Activated CD8-positive, alpha-beta T cell treated with anti-CD3 and anti-CD28 coated beads, Interleukin-2, amount 10 ng/mL, durations not matched to agents 7 days and 5 days (primary cell): ENCODE measurements at regions of chr18 and their contacts with region 1.

Region 1: GRCh38 chr18:59070181-59070912 is 69.3 kb upstream of the SEC11C start:
- DNase-seq: peak; percentile 83
- ATAC-seq: peak; percentile 88
- H3K4me3 Mint-ChIP-seq: no peak overlapping the region
- H3K27ac Mint-ChIP-seq: no peak overlapping the region
- H3K4me1 Mint-ChIP-seq: no peaks in the 10 kb centered on the region
- H3K27me3 Mint-ChIP-seq: peaks cover 13% of the 10 kb centered on the region

Region 2: GRCh38 chr18:58776084-58776483 is 294.3 kb before region 1 on chr18:
- CTCF ChIA-PET with region 1: interaction called, 30 read pairs
- POLR2A ChIA-PET with region 1: no interaction called
- DNase-seq: no peak
- ATAC-seq: no peak
- H3K4me3 Mint-ChIP-seq: no peak overlapping the region
- H3K27ac Mint-ChIP-seq: no peak overlapping the region
- H3K4me1 Mint-ChIP-seq: peaks cover 1% of the 10 kb centered on the region
- H3K27me3 Mint-ChIP-seq: peaks cover 12% of the 10 kb centered on the region

Region 3: GRCh38 chr18:58781627-58782194 is 288.6 kb before region 1 on chr18:
- CTCF ChIA-PET with region 1: interaction called, 30 read pairs
- POLR2A ChIA-PET with region 1: no interaction called
- DNase-seq: peak; percentile 78
- ATAC-seq: peak; percentile 89
- H3K4me3 Mint-ChIP-seq: no peak overlapping the region
- H3K27ac Mint-ChIP-seq: no peak overlapping the region
- H3K4me1 Mint-ChIP-seq: no peaks in the 10 kb centered on the region
- H3K27me3 Mint-ChIP-seq: peaks cover 8% of the 10 kb centered on the region

Region 4: GRCh38 chr18:59085797-59086196 is 15.4 kb after region 1 on chr18:
- CTCF ChIA-PET with region 1: interaction called, 29 read pairs
- POLR2A ChIA-PET with region 1: interaction called, 4 read pairs
- DNase-seq: no peak
- ATAC-seq: no peak
- H3K4me3 Mint-ChIP-seq: no peak overlapping the region
- H3K27ac Mint-ChIP-seq: no peak overlapping the region
- H3K4me1 Mint-ChIP-seq: peaks cover 4% of the 10 kb centered on the region
- H3K27me3 Mint-ChIP-seq: peaks cover 9% of the 10 kb centered on the region